Activated naive CD4-positive, alpha-beta T cell treated with anti-CD3 and anti-CD28 coated beads for 36 hours (primary cell): ENCODE measurements at regions of chr12 and their contacts with region 1.

Region 1: DNA sequence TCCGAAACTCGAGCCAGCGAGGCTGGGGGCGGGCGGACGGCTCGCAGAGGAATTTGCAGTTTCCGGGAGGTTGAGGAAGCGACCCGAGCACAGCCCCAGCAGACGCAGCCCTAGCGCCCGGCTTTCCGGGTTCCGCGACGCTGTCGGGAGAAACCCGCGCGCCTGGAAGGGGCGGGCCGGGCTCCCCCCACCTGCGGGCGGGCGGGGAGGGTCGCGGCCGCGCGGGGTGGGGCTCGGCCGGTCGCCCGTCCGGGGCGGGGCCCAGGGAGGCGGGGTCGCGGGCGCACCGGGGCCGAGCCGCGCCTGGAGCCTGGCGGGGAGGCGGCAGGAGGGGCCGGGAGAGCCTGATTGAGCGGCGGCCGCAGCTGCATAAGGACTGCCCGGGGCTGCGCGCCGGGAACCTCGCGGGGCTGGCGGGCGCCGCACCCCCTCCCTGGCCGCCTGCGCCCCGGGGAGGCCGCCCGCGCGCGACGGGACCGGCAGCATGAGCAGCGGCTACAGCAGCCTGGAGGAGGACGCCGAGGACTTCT is at the start of gene RASSF3:
- DNase-seq: peak; percentile 83
- H3K4me3 Mint-ChIP-seq: peak within 1 kb of the TSS; percentile 95
- H3K27ac Mint-ChIP-seq: peak within 1 kb of the TSS; percentile 96
- H3K4me1 Mint-ChIP-seq: peaks cover 43% of the 10 kb centered on the region
- H3K27me3 Mint-ChIP-seq: no peaks in the 10 kb centered on the region
- total RNA-seq, gene RASSF3: 39.4 to 43.8 TPM

Region 2: GRCh38 chr12:64451687-64452558 is 158.3 kb before region 1 on chr12 and contains the start of gene TBK1:
- CTCF ChIA-PET with region 1: interaction called, 3 read pairs
- intact Hi-C with region 1: loop called (anchors 2 kb)
- DNase-seq: peak; percentile 45
- H3K4me3 Mint-ChIP-seq: peak within 1 kb of the TSS; percentile 94
- H3K27ac Mint-ChIP-seq: peak within 1 kb of the TSS; percentile 94
- H3K4me1 Mint-ChIP-seq: peaks cover 41% of the 10 kb centered on the region
- H3K27me3 Mint-ChIP-seq: no peaks in the 10 kb centered on the region
- total RNA-seq, gene TBK1: 10.7 to 12.1 TPM

Region 3: DNA sequence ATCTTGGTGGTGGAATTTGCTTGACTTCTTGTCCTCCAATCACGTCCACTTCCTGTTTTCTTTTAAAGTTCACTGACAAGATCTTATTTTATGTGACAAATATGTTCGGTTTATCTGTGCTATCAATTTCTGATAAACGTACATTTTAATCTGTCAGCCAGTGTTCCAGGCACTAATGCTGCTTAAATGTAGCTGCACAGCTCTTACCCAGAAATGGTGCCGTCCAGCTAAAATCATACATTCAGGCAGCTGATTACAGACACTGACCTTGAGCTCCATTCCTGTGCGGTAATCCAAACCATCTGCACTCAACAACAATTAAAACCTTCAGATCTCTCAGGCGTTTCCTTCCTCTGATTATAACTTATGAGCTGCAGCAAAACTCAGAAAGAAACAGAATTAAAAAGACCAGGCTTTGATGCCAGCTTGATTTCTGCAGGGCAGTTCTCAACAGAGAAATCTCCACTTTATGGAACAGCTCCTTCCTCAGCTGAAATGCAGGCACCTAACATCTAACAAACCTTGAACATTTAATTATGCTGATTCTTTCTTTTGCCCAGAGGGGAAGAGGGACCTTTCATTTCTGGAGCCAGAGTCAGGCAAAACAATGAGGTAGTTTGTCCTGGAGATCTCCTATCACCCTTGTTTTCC is 26.3 kb before region 1 on chr12:
- CTCF ChIA-PET with region 1: interaction called, 7 read pairs
- intact Hi-C with region 1: loop called (anchors 1 kb)
- DNase-seq: no peak
- H3K4me3 Mint-ChIP-seq: peak overlapping the region; percentile 55
- H3K27ac Mint-ChIP-seq: peak overlapping the region; percentile 72
- H3K4me1 Mint-ChIP-seq: peaks cover 28% of the 10 kb centered on the region
- H3K27me3 Mint-ChIP-seq: no peaks in the 10 kb centered on the region

Region 4: DNA sequence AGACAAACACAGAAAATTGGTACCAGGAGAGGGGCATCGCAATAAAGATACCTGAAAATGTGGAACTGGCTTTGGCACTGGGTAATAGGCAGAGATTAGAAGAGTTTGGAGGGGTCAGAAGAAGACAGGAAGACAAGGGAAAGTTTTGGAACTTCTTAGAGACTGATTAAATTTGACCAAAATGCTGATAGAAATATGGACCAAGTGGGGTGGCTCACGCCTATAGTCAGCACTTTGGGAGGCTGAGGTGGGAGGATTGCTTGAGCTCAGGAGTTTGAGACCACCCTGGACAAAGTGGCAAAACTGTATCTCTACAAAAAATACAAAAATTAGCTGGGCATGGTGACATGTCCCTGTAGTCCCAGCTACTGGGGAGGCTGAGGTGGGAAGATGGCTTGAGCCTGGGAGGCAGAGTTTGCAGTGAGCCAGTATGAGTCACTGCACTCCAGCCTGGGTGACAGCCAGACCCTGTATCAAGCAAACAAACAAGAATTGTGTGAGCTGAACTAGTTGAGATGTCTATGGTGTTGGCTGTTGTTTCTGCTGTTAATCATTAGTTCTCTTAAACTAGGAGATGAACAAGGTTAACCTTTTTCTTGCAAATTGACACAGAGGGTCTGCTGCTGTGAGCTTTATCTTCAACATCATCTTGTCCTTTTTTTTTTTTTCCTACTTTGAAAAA is 23.6 kb after region 1 on chr12:
- CTCF ChIA-PET with region 1: no interaction called
- intact Hi-C with region 1: no loop called
- DNase-seq: peak; percentile 52
- H3K4me3 Mint-ChIP-seq: no peak overlapping the region
- H3K27ac Mint-ChIP-seq: peak overlapping the region; percentile 70
- H3K4me1 Mint-ChIP-seq: peaks cover 79% of the 10 kb centered on the region
- H3K27me3 Mint-ChIP-seq: no peaks in the 10 kb centered on the region

Region 5: GRCh38 chr12:64669270-64669842 is 59.1 kb after region 1 on chr12:
- CTCF ChIA-PET with region 1: interaction called, 5 read pairs
- intact Hi-C with region 1: loop called (anchors 1 kb)
- DNase-seq: peak; percentile 63
- H3K4me3 Mint-ChIP-seq: peak overlapping the region; percentile 78
- H3K27ac Mint-ChIP-seq: peak overlapping the region; percentile 92
- H3K4me1 Mint-ChIP-seq: peaks cover 93% of the 10 kb centered on the region
- H3K27me3 Mint-ChIP-seq: no peaks in the 10 kb centered on the region

Region 6: GRCh38 chr12:64687816-64688215 is 77.6 kb after region 1 on chr12:
- CTCF ChIA-PET with region 1: interaction called, 6 read pairs
- intact Hi-C with region 1: loop called (anchors 2 kb)
- DNase-seq: no peak
- H3K4me3 Mint-ChIP-seq: peak overlapping the region; percentile 40
- H3K27ac Mint-ChIP-seq: peak overlapping the region; percentile 78
- H3K4me1 Mint-ChIP-seq: peaks cover 74% of the 10 kb centered on the region
- H3K27me3 Mint-ChIP-seq: no peaks in the 10 kb centered on the region

Region 7: DNA sequence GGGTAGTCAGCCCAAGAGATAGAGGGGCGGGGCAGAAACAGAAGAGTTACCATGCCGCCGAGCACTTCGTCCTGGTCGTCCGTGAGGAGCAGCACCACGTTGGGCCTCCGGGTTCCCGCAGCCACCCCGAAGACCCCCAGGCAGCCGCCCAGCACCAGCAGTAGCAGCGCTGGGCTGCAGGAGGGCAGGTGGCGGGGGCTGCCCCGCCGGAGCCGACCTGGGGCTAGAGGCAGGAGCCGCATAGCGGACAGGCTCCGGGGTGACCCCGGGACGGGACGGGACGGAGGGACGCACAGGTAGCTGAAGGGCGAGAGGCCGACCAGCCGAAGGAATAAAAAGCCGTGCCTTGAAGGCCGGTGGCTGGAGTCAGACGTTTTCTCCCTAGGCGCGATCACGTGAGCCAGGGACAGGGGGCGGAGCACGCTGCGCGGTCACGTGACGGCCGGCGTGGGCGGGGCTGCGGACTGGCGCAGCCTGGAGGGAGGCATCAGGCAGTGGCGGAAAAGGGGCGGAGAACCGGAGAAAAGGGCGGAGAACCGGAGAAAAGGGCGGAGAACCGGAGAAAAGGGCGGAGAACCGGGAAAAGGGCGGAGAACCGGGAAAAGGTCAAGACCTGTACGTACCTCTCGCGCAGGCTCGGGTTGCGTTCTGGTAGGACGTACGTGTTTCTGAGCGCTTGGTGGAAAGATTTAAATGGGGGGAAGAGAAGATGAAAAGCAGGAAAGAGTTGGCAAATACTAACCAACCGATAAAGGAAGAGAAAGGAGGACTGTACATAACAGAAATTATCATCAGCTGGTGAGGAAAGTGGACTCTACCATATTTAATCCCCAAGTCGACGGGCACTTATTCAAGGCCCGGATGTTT is 149.1 kb after region 1 on chr12 and contains the start of gene GNS:
- CTCF ChIA-PET with region 1: interaction called, 3 read pairs
- intact Hi-C with region 1: loop called (anchors 1 kb)
- DNase-seq: peak; percentile 98
- H3K4me3 Mint-ChIP-seq: peak within 1 kb of the TSS; percentile 83
- H3K27ac Mint-ChIP-seq: peak within 1 kb of the TSS; percentile 85
- H3K4me1 Mint-ChIP-seq: peaks cover 41% of the 10 kb centered on the region
- H3K27me3 Mint-ChIP-seq: no peaks in the 10 kb centered on the region
- total RNA-seq, gene GNS: 14.3 to 14.6 TPM

Region 8: DNA sequence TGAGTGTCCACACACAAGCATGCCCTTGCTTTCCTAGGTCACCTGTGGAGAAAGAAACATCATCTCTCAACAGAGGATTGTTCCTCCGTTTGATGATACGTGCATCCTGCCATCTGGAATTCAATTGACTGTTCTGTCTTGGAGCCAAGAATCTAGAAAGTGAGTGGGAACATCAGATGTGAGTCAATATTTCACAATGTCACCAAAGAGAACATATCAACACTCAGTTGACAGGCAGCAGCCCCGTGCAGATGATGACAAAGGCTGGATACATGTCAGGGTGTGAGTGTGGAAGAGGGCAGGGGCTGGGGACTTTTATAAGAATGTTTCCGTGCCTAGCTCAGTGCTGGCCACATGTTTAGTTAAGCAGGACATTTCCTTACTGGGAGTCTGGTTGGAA is 290.3 kb after region 1 on chr12:
- CTCF ChIA-PET with region 1: no interaction called
- intact Hi-C with region 1: no loop called
- DNase-seq: no peak
- H3K4me3 Mint-ChIP-seq: no peak overlapping the region
- H3K27ac Mint-ChIP-seq: no peak overlapping the region
- H3K4me1 Mint-ChIP-seq: no peaks in the 10 kb centered on the region
- H3K27me3 Mint-ChIP-seq: no peaks in the 10 kb centered on the region